ENCODE measurements at regions of chr1 and their contacts with region 1.

Region 1: DNA sequence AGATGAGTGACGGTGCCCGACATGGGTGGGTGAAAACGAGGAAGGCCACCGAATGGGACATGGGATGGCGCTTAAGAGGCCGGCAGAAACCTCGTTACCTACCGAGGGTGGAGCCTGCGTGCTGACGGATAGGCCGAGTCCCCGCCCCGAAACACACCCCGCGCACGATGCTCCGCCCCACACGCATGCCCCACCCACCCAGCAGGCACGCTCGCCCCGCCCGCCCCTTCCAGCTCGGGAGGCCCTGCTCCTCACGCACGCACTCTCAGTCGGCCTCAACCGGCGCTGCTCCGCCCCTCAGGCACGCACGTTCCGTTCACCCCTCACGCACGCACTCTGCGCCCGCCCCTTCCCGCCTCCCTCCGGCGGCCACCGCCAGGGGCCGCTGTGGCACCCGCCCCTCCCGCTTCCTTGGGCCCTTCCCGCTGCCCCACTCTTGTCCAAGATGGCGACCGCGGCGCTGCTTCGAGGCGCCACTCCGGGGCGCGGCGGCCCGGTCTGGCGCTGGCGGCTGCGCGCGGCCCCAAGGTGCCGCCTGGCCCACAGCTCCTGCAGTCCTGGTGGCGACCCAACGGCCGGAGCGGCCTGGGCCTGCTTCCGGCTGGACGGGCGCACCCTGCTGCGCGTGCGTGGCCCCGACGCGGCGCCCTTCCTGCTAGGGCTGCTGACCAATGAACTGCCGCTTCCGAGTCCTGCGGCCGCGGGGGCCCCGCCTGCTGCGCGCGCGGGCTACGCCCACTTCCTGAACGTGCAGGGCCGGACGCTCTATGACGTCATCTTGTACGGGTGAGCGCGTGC is at the start of gene IBA57:
- DNase-seq: peak; percentile 99 to 100 (median 100)
- H3K4me3 ChIP-seq: peak within 1 kb of the TSS; percentile 72
- H3K27ac ChIP-seq: peak within 1 kb of the TSS; percentile 99 to 100
- H3K4me1 ChIP-seq: peaks cover 14% of the 10 kb centered on the region
- H3K27me3 ChIP-seq: no peaks in the 10 kb centered on the region
- CTCF ChIP-seq: peak; percentile 95 to 100 (median 100)
- EP300 ChIP-seq: peak; percentile 97
- POLR2A ChIP-seq: peak; percentile 99
- total RNA-seq, gene IBA57: 3.7 to 14.5 (median 11.1) TPM

Region 2: GRCh38 chr1:227449051-227449450 is 716.5 kb before region 1 on chr1:
- intact Hi-C with region 1: loop called in 1 of 4 experiments (anchors 1 kb)
- DNase-seq: no peak
- H3K4me3 ChIP-seq: no peak overlapping the region
- H3K27ac ChIP-seq: no peak overlapping the region
- H3K4me1 ChIP-seq: no peaks in the 10 kb centered on the region
- H3K27me3 ChIP-seq: no peaks in the 10 kb centered on the region
- CTCF ChIP-seq: no peak
- EP300 ChIP-seq: no peak
- POLR2A ChIP-seq: no peak

Region 3: DNA sequence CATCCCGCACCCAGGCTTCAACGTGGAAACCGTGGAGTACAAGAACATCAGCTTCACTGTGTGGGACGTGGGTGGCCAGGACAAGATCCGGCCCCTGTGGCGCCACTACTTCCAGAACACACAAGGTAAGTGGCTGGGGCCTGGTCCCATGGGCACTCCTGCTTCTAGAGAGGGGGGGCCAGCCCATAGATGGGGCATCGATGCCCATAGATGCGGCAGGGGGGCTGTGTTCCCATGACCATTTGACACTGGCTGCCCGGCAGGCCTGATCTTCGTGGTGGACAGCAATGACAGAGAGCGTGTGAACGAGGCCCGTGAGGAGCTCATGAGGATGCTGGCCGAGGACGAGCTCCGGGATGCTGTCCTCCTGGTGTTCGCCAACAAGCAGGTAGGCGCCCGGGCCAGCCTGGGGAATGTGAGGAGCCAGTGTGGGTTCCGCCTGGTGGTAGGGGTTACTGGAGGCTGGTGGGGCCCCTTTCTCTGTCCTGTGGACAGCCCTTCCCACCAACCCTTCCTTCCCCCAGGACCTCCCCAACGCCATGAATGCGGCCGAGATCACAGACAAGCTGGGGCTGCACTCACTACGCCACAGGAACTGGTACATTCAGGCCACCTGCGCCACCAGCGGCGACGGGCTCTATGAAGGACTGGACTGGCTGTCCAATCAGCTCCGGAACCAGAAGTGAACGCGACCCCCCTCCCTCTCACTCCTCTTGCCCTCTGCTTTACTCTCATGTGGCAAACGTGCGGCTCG is 68.1 kb before region 1 on chr1:
- intact Hi-C with region 1: no loop called
- DNase-seq: peak in 2 of 5 donors; percentile 22 to 23
- H3K4me3 ChIP-seq: no peak overlapping the region
- H3K27ac ChIP-seq: no peak overlapping the region
- H3K4me1 ChIP-seq: peaks cover 2% of the 10 kb centered on the region
- H3K27me3 ChIP-seq: no peaks in the 10 kb centered on the region
- CTCF ChIP-seq: no peak
- EP300 ChIP-seq: no peak
- POLR2A ChIP-seq: no peak

Region 4: GRCh38 chr1:228109073-228109961 is 56.3 kb before region 1 on chr1 and contains the start of gene MRPL55:
- intact Hi-C with region 1: loop called in 1 of 4 experiments (anchors 2 kb)
- DNase-seq: peak; percentile 98 to 100 (median 99)
- H3K4me3 ChIP-seq: peak within 1 kb of the TSS; percentile 72
- H3K27ac ChIP-seq: peak within 1 kb of the TSS; percentile 74
- H3K4me1 ChIP-seq: peaks cover 5% of the 10 kb centered on the region
- H3K27me3 ChIP-seq: no peaks in the 10 kb centered on the region
- CTCF ChIP-seq: peak in 1 of 3 donors; percentile 18
- EP300 ChIP-seq: no peak
- POLR2A ChIP-seq: peak; percentile 94
- total RNA-seq, gene MRPL55: 36.4 to 98.5 (median 43.3) TPM

Region 5: DNA sequence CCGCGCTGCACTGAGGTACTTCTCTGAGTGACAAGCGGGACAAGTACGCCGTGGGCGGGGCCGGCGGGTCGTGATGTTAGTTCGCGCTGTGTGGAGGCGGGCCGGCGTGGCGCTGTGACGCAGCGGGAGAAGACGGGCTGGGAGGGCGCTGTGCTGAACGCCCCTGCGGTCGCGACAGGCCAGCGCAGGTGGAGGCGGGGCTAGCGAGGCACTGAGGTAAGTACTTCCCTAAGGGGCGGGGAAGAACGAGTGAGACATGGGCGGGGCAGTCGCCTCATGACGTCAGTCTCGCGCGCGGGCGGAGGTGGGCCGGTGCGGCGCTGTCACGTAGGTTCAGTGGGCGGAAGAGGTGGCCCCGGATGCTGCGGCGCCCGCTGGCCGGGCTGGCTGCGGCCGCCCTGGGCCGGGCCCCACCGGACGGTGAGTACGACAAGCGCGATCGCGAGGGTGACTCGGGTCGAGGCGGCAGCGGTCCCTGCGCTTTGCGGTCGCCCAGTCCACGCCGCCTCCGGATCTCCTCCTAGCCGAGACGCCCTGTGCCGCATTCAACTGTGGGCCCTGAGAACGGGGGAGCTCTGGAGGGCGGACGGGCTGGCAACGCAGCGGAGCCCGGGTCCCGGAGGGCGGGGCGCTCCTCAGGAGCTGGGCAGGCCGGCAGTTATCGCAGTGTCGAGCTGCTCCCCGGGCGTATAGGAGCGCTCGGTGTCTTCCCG is 25.5 kb before region 1 on chr1 and contains the start of gene GUK1:
- intact Hi-C with region 1: loop called in 1 of 4 experiments (anchors 1 kb)
- DNase-seq: peak; percentile 99 to 100 (median 99)
- H3K4me3 ChIP-seq: peak within 1 kb of the TSS; percentile 83
- H3K27ac ChIP-seq: peak within 1 kb of the TSS; percentile 49 to 88
- H3K4me1 ChIP-seq: peaks cover 16% of the 10 kb centered on the region
- H3K27me3 ChIP-seq: no peaks in the 10 kb centered on the region
- CTCF ChIP-seq: peak; percentile 20 to 62 (median 55)
- EP300 ChIP-seq: peak; percentile 81
- POLR2A ChIP-seq: peak; percentile 96
- total RNA-seq, gene GUK1: 129 to 256 (median 171) TPM

Region 6: DNA sequence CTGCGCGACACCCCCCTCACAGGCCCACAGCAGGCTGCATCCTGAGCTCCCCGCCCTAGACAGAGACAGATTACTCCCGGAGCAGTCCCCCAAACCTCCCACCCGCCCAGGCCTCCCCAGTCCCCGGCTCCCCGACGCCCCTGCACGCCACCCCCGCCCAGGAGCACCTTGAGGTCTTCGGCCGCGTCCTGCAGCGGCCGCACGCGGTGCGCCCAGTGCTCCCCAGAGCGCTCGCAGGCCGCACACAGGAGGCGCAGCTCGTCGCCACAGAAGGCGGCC is 240.4 kb after region 1 on chr1:
- intact Hi-C with region 1: loop called in 1 of 4 experiments (anchors 10 kb)
- DNase-seq: peak in 1 of 5 donors; percentile 16
- H3K4me3 ChIP-seq: peak overlapping the region; percentile 77
- H3K27ac ChIP-seq: peak overlapping the region; percentile 10 to 49
- H3K4me1 ChIP-seq: peaks cover 13% of the 10 kb centered on the region
- H3K27me3 ChIP-seq: no peaks in the 10 kb centered on the region
- CTCF ChIP-seq: no peak
- EP300 ChIP-seq: no peak
- POLR2A ChIP-seq: no peak